HepG2 (cell line): ENCODE measurements at regions of chr10 and their contacts with region 1.

Region 1: DNA sequence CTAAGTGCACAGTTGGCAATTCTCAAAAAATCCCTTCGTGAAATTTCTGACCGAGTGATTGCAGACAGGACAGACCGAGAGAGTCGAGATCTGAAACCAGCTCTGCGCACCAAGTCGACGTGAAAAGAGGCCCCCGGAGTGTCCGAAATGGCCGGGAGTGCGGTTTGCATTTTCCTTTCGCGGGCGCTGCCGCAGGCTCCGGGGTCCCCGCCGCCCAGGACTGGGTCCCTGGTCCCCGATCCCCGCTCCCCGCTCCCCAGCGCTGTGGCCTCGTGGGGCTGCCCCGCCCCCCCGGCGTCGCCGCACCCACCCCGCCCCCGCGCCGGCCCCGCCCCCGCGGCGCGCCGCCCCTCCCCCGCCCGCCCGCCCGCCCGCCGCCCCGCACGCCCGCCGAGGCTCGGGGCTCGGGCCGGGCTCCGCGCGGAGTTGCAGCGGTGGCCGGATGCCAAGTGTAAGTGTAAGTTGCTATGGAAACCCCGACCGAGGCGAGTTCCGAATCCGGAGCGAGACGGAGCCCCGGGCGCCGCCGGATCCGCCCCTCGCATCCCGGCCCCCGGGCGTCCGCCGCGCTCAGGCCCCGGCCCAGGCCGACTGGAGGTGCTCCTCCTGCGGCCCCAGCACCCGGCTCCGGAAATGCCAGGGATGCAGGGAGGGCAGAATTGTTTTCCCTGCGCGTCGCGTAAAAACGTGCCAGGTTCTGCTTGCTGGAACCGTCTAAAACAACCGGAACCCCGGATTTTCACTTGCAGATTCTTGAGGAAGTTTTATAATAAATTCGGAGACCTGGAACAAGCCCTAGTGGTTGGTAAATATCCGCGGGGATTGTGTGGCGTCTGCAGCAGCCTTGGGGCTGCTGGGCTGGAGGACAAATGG is 4.6 kb downstream of the BMI1 start:
- DNase-seq: peak; percentile 61
- ATAC-seq: peak; percentile 85
- H3K4me3 ChIP-seq: peak overlapping the region; percentile 60 to 91 (median 79)
- H3K27ac ChIP-seq: peak overlapping the region; percentile 56
- H3K4me1 ChIP-seq: peaks cover 38% of the 10 kb centered on the region
- H3K27me3 ChIP-seq: peaks cover 0 to 7% of the 10 kb centered on the region in 2 experiments; a peak in 2 of 5 replicates
- CTCF ChIP-seq: no peak
- EP300 ChIP-seq: no peak
- POLR2A ChIP-seq: no peak
- RAD21 ChIP-seq: peak; percentile 37; the same call in 1 of the 2 replicates

Region 2: DNA sequence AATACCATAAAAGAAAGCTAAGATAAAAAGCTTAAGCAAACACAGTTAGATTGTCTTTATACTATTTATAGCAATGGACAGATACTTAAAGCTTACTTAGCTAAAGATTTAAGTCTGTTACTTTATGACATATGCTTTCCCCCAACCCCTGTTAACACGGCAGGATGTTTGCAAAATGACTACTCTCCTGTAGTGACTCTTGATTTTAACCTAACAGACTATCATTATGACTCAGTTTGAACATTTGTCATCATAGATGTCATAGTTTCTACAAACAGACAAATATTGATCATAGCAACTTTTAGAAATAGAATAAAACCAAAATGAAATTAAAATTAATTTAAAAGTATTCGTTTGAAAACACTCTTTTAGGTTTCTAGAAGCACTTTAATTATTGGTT is 17.1 kb before region 1 on chr10:
- CTCF ChIA-PET with region 1: no interaction called
- POLR2A ChIA-PET with region 1: no interaction called
- in situ Hi-C with region 1: no loop called
- intact Hi-C with region 1: no loop called
- DNase-seq: no peak
- ATAC-seq: no peak
- H3K4me3 ChIP-seq: no peak overlapping the region
- H3K27ac ChIP-seq: no peak overlapping the region
- H3K4me1 ChIP-seq: no peaks in the 10 kb centered on the region
- H3K27me3 ChIP-seq: 0 out of 5 replicates have a peak, but pooled peaks cover 0 to 4% of the 10 kb centered on the region in 2 experiments
- CTCF ChIP-seq: no peak
- EP300 ChIP-seq: no peak
- POLR2A ChIP-seq: no peak
- RAD21 ChIP-seq: no peak

Region 3: GRCh38 chr10:22453948-22454591 is 128.6 kb after region 1 on chr10:
- CTCF ChIA-PET with region 1: no interaction called
- POLR2A ChIA-PET with region 1: no interaction called
- in situ Hi-C with region 1: no loop called
- intact Hi-C with region 1: no loop called
- DNase-seq: no peak
- ATAC-seq: no peak
- H3K4me3 ChIP-seq: no peak overlapping the region
- H3K27ac ChIP-seq: no peak overlapping the region
- H3K4me1 ChIP-seq: no peaks in the 10 kb centered on the region
- H3K27me3 ChIP-seq: no peaks in the 10 kb centered on the region
- CTCF ChIP-seq: no peak
- EP300 ChIP-seq: no peak
- POLR2A ChIP-seq: no peak
- RAD21 ChIP-seq: no peak

Region 4: GRCh38 chr10:22518167-22518724 is 192.7 kb after region 1 on chr10:
- CTCF ChIA-PET with region 1: no interaction called
- POLR2A ChIA-PET with region 1: no interaction called
- in situ Hi-C with region 1: no loop called
- intact Hi-C with region 1: loop called (anchors 10 kb)
- DNase-seq: no peak
- ATAC-seq: no peak
- H3K4me3 ChIP-seq: no peak overlapping the region
- H3K27ac ChIP-seq: no peak overlapping the region
- H3K4me1 ChIP-seq: peaks cover 11% of the 10 kb centered on the region
- H3K27me3 ChIP-seq: peaks cover 0 to 16% of the 10 kb centered on the region in 2 experiments; a peak in 3 of 5 replicates
- CTCF ChIP-seq: no peak
- EP300 ChIP-seq: no peak
- POLR2A ChIP-seq: no peak
- RAD21 ChIP-seq: no peak

Region 5: DNA sequence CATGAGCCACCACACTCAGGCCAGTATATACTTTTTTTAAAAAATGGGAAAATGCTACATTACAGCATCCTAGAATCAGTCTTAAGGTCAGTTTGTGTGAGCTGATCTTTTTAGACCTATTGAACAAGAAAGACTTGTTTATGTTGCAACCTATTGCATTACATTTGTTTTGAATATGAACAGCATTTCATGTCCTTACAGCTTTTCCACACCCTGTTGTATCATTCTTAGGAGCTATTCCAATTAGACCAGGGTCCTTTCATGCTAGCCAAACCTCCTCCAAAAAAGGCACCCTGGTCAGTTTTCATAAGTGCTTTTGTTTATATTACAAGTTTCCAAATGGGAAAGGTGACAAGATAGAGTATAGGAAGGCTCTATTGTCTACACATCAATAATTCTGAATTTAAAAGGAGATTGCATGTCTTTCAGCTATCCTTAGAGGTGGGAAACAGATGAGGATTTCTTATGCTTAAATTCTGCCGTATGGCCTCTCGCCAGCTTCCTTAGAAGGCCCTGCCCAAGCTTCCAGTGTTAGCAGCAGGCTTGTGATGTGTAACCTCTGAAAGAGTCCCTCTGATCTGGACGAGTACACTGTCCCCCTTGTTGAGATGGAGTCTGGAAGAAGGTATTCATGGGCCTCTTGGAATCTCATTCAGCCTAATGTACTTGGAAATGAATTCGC is 1285.3 kb after region 1 on chr10:
- CTCF ChIA-PET with region 1: no interaction called
- POLR2A ChIA-PET with region 1: no interaction called
- in situ Hi-C with region 1: no loop called
- intact Hi-C with region 1: no loop called
- DNase-seq: no peak
- ATAC-seq: no peak
- H3K4me3 ChIP-seq: no peak overlapping the region
- H3K27ac ChIP-seq: no peak overlapping the region
- H3K4me1 ChIP-seq: no peaks in the 10 kb centered on the region
- H3K27me3 ChIP-seq: no peaks in the 10 kb centered on the region; a peak in 1 of 5 replicates
- CTCF ChIP-seq: no peak
- EP300 ChIP-seq: no peak
- POLR2A ChIP-seq: no peak
- RAD21 ChIP-seq: no peak